Mammary epithelial cell (primary cell): ENCODE measurements at regions of chr3 and their contacts with region 1.

Region 1: GRCh38 chr3:129992781-129993180 is 18.3 kb downstream of the TRH start:
- DNase-seq: no peak
- H3K4me3 ChIP-seq: no peak overlapping the region
- H3K27ac ChIP-seq: no peak overlapping the region
- H3K4me1 ChIP-seq: peaks cover 7% of the 10 kb centered on the region
- H3K27me3 ChIP-seq: no peaks in the 10 kb centered on the region
- CTCF ChIP-seq: peak; percentile 7 to 29

Region 2: DNA sequence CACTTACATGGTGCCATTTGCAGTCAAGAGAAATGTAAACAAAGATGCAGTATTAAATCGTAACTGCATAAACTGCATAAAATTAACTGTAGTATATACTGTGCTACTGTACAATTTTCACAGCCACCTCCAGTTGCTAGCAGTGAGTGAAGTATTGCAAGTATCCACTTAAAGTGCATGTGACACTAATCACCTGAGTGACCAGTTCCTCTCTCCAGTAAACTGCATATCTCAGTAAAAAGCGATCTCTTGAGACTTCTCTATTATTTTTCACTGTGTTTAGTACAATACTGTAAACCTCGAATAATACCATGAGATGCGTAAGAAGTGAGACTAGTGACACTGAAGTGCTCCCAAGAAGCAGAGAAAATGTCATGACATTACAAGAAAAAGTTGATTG is 274.6 kb before region 1 on chr3:
- CTCF ChIA-PET with region 1: no interaction called
- dilution Hi-C with region 1: no loop called
- in situ Hi-C with region 1: no loop called
- intact Hi-C with region 1: no loop called
- DNase-seq: no peak
- H3K4me3 ChIP-seq: no peak overlapping the region
- H3K27ac ChIP-seq: no peak overlapping the region
- H3K4me1 ChIP-seq: peaks cover 3% of the 10 kb centered on the region
- H3K27me3 ChIP-seq: no peaks in the 10 kb centered on the region
- CTCF ChIP-seq: no peak

Region 3: GRCh38 chr3:129927072-129927471 is 65.7 kb before region 1 on chr3:
- CTCF ChIA-PET with region 1: no interaction called
- dilution Hi-C with region 1: loop called (anchors 5 kb)
- in situ Hi-C with region 1: no loop called
- intact Hi-C with region 1: no loop called
- DNase-seq: no peak
- H3K4me3 ChIP-seq: no peak overlapping the region
- H3K27ac ChIP-seq: no peak overlapping the region
- H3K4me1 ChIP-seq: no peaks in the 10 kb centered on the region
- H3K27me3 ChIP-seq: no peaks in the 10 kb centered on the region
- CTCF ChIP-seq: no peak

Region 4: GRCh38 chr3:129961134-129961541 is 31.6 kb before region 1 on chr3:
- CTCF ChIA-PET with region 1: no interaction called
- dilution Hi-C with region 1: loop called (anchors 5 kb)
- in situ Hi-C with region 1: no loop called
- intact Hi-C with region 1: no loop called
- DNase-seq: no peak
- H3K4me3 ChIP-seq: no peak overlapping the region
- H3K27ac ChIP-seq: no peak overlapping the region
- H3K4me1 ChIP-seq: no peaks in the 10 kb centered on the region
- H3K27me3 ChIP-seq: no peaks in the 10 kb centered on the region
- CTCF ChIP-seq: no peak